Ascending aorta (tissue), 2 donors: ENCODE measurements at regions of chr7 and their contacts with region 1.

Region 1: DNA sequence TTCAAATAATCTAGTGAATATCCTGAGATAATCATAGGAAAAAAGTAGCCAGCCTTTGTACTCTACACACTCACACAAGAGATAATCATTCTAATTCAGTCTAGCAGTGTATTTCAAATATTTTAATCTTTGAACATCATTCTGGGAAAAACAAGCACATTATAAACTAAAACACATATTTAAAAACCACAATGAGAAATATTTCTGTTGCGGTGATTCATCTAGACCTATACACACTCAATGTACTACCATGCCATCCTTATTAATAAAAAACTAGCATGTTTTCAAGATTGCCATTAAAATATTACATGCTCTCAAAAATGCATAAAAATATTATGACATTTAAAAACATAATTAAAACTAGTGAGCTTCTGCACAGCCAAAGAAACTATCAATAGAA is 11.8 kb downstream of the COG5 start:
- DNase-seq: no peak
- H3K4me3 ChIP-seq: no peak overlapping the region
- H3K27ac ChIP-seq: no peak overlapping the region
- H3K4me1 ChIP-seq: no peaks in the 10 kb centered on the region
- H3K27me3 ChIP-seq: no peaks in the 10 kb centered on the region
- CTCF ChIP-seq: no peak

Region 2: DNA sequence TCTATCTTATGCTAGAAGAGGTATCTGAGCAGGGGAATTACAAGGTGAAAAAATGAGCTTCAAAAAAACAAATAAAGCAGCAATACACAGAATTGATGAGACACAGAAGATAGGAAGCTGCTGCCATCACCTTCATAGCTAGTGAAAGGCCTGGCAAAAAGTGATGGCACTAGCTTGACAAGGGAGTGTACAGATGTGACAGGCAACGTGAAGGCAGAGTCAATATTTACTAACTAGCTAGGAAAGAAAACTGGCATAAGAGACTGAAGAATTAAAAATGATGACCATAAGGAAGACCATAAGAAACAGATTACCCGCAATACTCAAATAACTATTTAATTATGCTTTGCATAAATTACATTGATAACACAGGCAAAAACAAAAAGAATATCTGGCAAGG is 72.6 kb before region 1 on chr7:
- intact Hi-C with region 1: loop called (anchors 5 kb)
- DNase-seq: no peak
- H3K4me3 ChIP-seq: no peak overlapping the region
- H3K27ac ChIP-seq: no peak overlapping the region
- H3K4me1 ChIP-seq: no peaks in the 10 kb centered on the region
- H3K27me3 ChIP-seq: no peaks in the 10 kb centered on the region
- CTCF ChIP-seq: no peak

Region 3: GRCh38 chr7:107579885-107580715 is 28.2 kb after region 1 on chr7 and contains the start of gene BCAP29:
- intact Hi-C with region 1: no loop called
- DNase-seq: peak; percentile 19 to 89
- H3K4me3 ChIP-seq: peak within 1 kb of the TSS; percentile 84 to 91
- H3K27ac ChIP-seq: peak within 1 kb of the TSS; percentile 93 to 97
- H3K4me1 ChIP-seq: peaks cover 0 to 11% of the 10 kb centered on the region in 2 donors
- H3K27me3 ChIP-seq: no peaks in the 10 kb centered on the region
- CTCF ChIP-seq: peak; percentile 22 to 50 (median 29)
- total RNA-seq, gene BCAP29: 73.2 TPM